ENCODE measurements at regions of chr2 and their contacts with region 1.

Region 1: DNA sequence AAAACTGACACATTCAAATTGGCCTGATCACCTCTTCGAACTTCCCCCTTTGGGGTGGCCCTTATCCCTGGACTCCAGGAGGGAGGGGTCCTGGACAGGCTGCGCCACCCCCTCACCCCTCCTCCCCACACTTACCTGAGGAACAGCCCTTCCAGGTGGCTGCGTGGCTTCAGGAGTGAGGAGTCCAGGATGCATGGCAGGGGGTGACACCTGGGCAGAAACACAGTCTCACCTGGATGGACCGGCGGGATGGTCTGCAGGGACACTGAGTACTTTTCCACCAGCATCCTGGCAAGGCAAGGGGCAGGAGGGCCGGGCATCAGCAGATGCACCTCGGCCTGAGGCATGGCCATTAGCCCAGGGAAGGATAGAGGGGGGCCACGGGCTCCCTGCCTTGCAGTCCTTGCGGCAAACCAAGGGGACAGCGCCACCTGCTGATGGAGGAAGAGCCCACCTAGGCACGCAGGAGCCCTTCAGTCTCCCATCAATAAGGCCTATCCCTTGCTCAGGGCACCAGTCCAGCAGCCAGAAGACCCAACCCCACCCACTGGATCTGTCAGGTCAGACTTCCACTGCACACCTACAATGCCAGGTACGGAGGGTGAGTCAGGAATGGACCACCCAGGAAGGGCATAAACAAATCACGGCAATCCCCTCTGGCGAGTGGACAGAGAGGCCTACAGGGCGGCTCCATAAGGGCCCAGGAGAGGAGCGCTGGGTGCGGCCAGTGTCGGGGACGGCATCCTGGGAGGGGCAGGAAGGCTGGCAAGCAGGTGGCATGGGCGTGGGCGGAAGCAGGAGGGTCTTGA is 26.0 kb downstream of the FAM178B start:
- DNase-seq: peak; percentile 75 to 93 (median 84)
- ATAC-seq: no peak
- H3K4me3 ChIP-seq: no peak overlapping the region
- H3K4me3 Mint-ChIP-seq: peak overlapping the region; percentile 71
- H3K27ac ChIP-seq: no peak overlapping the region
- H3K27ac Mint-ChIP-seq: peak overlapping the region; percentile 93
- H3K4me1 ChIP-seq: peaks cover 56% of the 10 kb centered on the region
- H3K4me1 Mint-ChIP-seq: peaks cover 56% of the 10 kb centered on the region
- H3K27me3 ChIP-seq: no peaks in the 10 kb centered on the region
- H3K27me3 Mint-ChIP-seq: no peaks in the 10 kb centered on the region
- CTCF ChIP-seq: peak; percentile 96

Region 2: GRCh38 chr2:96760036-96760985 is 200.0 kb before region 1 on chr2 and contains the start of gene CNNM4:
- CTCF ChIA-PET with region 1: no interaction called
- POLR2A ChIA-PET with region 1: interaction called, 8 read pairs
- intact Hi-C with region 1: loop called in 1 of 2 experiments (anchors 5 kb)
- DNase-seq: peak; percentile 81 to 95 (median 90)
- ATAC-seq: peak; percentile 95
- H3K4me3 ChIP-seq: peak within 1 kb of the TSS; percentile 72
- H3K4me3 Mint-ChIP-seq: peak within 1 kb of the TSS; percentile 94
- H3K27ac ChIP-seq: peak within 1 kb of the TSS; percentile 62 to 73
- H3K27ac Mint-ChIP-seq: peak within 1 kb of the TSS; percentile 93
- H3K4me1 ChIP-seq: peaks cover 59% of the 10 kb centered on the region
- H3K4me1 Mint-ChIP-seq: peaks cover 52% of the 10 kb centered on the region
- H3K27me3 ChIP-seq: no peaks in the 10 kb centered on the region
- H3K27me3 Mint-ChIP-seq: no peaks in the 10 kb centered on the region
- CTCF ChIP-seq: no peak
- total RNA-seq, gene CNNM4: 7.0 to 7.1 TPM

Region 3: DNA sequence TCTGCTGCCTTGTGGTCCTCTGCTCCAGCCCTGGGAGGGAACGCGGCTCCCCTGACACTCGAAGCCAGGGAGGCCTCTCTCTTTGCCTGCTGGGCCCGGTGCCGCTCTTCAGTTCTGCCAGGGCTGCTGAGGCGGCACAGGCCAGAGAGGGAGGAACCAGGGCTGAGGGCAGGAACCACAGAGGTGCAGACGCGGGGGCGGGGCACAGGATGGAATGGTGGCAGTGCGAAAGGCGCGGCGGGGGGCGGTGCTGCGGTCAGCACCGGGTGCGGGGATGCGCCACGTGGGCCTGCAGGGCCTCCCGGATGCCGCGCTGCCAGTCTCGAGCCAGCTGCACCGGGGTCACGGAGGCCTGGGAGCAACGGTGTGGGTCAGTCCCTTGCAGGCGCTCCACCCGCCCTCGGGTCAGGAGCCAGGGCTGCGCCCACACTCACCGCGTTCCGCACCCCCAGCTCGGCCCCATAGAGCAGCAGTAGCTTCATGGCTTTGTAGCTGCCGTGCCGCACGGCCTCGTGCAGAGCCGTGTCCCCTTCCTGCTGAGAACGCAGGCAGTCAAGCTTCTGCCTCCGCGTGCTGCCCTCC is 121.0 kb before region 1 on chr2:
- CTCF ChIA-PET with region 1: no interaction called
- POLR2A ChIA-PET with region 1: interaction called, 16 read pairs
- intact Hi-C with region 1: no loop called
- DNase-seq: peak; percentile 66 to 92 (median 84)
- ATAC-seq: peak; percentile 98
- H3K4me3 ChIP-seq: peak overlapping the region; percentile 46
- H3K4me3 Mint-ChIP-seq: peak overlapping the region; percentile 70
- H3K27ac ChIP-seq: no peak overlapping the region
- H3K27ac Mint-ChIP-seq: peak overlapping the region; percentile 68
- H3K4me1 ChIP-seq: peaks cover 22% of the 10 kb centered on the region
- H3K4me1 Mint-ChIP-seq: peaks cover 21% of the 10 kb centered on the region
- H3K27me3 ChIP-seq: no peaks in the 10 kb centered on the region
- H3K27me3 Mint-ChIP-seq: no peaks in the 10 kb centered on the region
- CTCF ChIP-seq: no peak

Region 4: GRCh38 chr2:96923810-96924774 is 36.3 kb before region 1 on chr2:
- CTCF ChIA-PET with region 1: no interaction called
- POLR2A ChIA-PET with region 1: interaction called, 14 read pairs
- intact Hi-C with region 1: loop called in 1 of 2 experiments (anchors 5 kb)
- DNase-seq: peak in 9 of 14 experiments; percentile 20 to 58 (median 39)
- ATAC-seq: peak; percentile 71
- H3K4me3 ChIP-seq: peak overlapping the region; percentile 48
- H3K4me3 Mint-ChIP-seq: peak overlapping the region; percentile 79
- H3K27ac ChIP-seq: peak overlapping the region; percentile 26 to 51
- H3K27ac Mint-ChIP-seq: peak overlapping the region; percentile 92
- H3K4me1 ChIP-seq: peaks cover 28% of the 10 kb centered on the region
- H3K4me1 Mint-ChIP-seq: peaks cover 37% of the 10 kb centered on the region
- H3K27me3 ChIP-seq: no peaks in the 10 kb centered on the region
- H3K27me3 Mint-ChIP-seq: no peaks in the 10 kb centered on the region
- CTCF ChIP-seq: no peak

Region 5: GRCh38 chr2:96992266-96992665 is 31.9 kb after region 1 on chr2:
- CTCF ChIA-PET with region 1: no interaction called
- POLR2A ChIA-PET with region 1: no interaction called
- intact Hi-C with region 1: no loop called
- DNase-seq: no peak
- ATAC-seq: no peak
- H3K4me3 ChIP-seq: no peak overlapping the region
- H3K4me3 Mint-ChIP-seq: no peak overlapping the region
- H3K27ac ChIP-seq: no peak overlapping the region
- H3K27ac Mint-ChIP-seq: no peak overlapping the region
- H3K4me1 ChIP-seq: no peaks in the 10 kb centered on the region
- H3K4me1 Mint-ChIP-seq: no peaks in the 10 kb centered on the region
- H3K27me3 ChIP-seq: no peaks in the 10 kb centered on the region
- H3K27me3 Mint-ChIP-seq: no peaks in the 10 kb centered on the region
- CTCF ChIP-seq: no peak